Activated naive CD4-positive, alpha-beta T cell treated with anti-CD3 and anti-CD28 coated beads, Interleukin-2, amount 10 ng/mL, durations not matched to agents 7 days and 5 days (primary cell): ENCODE measurements at regions of chr13 and their contacts with region 1.

Region 1: GRCh38 chr13:42990291-42991232 is 1.5 kb downstream of the EPSTI1 start:
- DNase-seq: no peak
- H3K4me3 Mint-ChIP-seq: peak overlapping the region; percentile 90
- H3K27ac Mint-ChIP-seq: peak overlapping the region; percentile 100
- H3K4me1 Mint-ChIP-seq: peaks cover 55% of the 10 kb centered on the region
- H3K27me3 Mint-ChIP-seq: no peaks in the 10 kb centered on the region

Region 2: GRCh38 chr13:42969558-42970172 is 20.9 kb before region 1 on chr13:
- CTCF ChIA-PET with region 1: interaction called, 10 read pairs
- DNase-seq: peak; percentile 88
- H3K4me3 Mint-ChIP-seq: no peak overlapping the region
- H3K27ac Mint-ChIP-seq: no peak overlapping the region
- H3K4me1 Mint-ChIP-seq: peaks cover 17% of the 10 kb centered on the region
- H3K27me3 Mint-ChIP-seq: no peaks in the 10 kb centered on the region